ENCODE measurements at regions of chr2 and their contacts with region 1.

Region 1: GRCh38 chr2:130850788-130851623 is 14.3 kb downstream of the ARHGEF4 start:
- DNase-seq: no peak
- ATAC-seq: no peak
- H3K4me3 ChIP-seq: no peak overlapping the region
- H3K4me3 Mint-ChIP-seq: no peak overlapping the region
- H3K27ac ChIP-seq: no peak overlapping the region
- H3K27ac Mint-ChIP-seq: no peak overlapping the region
- H3K4me1 ChIP-seq: no peaks in the 10 kb centered on the region
- H3K4me1 Mint-ChIP-seq: no peaks in the 10 kb centered on the region
- H3K27me3 ChIP-seq: no peaks in the 10 kb centered on the region
- H3K27me3 Mint-ChIP-seq: no peaks in the 10 kb centered on the region
- CTCF ChIP-seq: no peak

Region 2: DNA sequence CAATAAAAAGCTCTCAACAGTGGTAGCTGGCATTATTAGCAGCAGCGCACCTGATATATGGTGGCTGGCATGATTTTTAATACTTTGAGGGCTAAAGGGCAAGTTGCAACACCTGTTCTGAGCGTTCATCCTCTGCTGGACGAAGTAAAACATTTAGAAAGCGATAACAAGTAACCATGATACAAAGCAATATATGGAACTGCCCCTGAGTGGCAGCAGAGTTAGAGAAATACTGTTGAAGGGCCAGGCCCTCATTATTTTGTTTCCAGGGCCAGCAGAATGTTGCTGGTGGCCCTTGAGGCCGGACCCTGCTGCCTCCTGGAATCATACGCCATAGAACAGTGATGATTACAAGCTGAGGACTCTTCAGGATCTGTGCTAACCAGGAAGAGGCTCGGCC is 33.5 kb after region 1 on chr2:
- CTCF ChIA-PET with region 1: no interaction called
- POLR2A ChIA-PET with region 1: no interaction called
- intact Hi-C with region 1: no loop called
- DNase-seq: no peak
- ATAC-seq: no peak
- H3K4me3 ChIP-seq: no peak overlapping the region
- H3K4me3 Mint-ChIP-seq: no peak overlapping the region
- H3K27ac ChIP-seq: no peak overlapping the region
- H3K27ac Mint-ChIP-seq: no peak overlapping the region
- H3K4me1 ChIP-seq: no peaks in the 10 kb centered on the region
- H3K4me1 Mint-ChIP-seq: no peaks in the 10 kb centered on the region
- H3K27me3 ChIP-seq: no peaks in the 10 kb centered on the region
- H3K27me3 Mint-ChIP-seq: peaks cover 9% of the 10 kb centered on the region
- CTCF ChIP-seq: no peak

Region 3: GRCh38 chr2:131557558-131558321 is 706.7 kb after region 1 on chr2:
- CTCF ChIA-PET with region 1: no interaction called
- POLR2A ChIA-PET with region 1: no interaction called
- intact Hi-C with region 1: loop called in 1 of 2 experiments (anchors 5 kb)
- DNase-seq: no peak
- ATAC-seq: no peak
- H3K4me3 ChIP-seq: no peak overlapping the region
- H3K4me3 Mint-ChIP-seq: no peak overlapping the region
- H3K27ac ChIP-seq: no peak overlapping the region
- H3K27ac Mint-ChIP-seq: no peak overlapping the region
- H3K4me1 ChIP-seq: no peaks in the 10 kb centered on the region
- H3K4me1 Mint-ChIP-seq: no peaks in the 10 kb centered on the region
- H3K27me3 ChIP-seq: no peaks in the 10 kb centered on the region
- H3K27me3 Mint-ChIP-seq: peaks cover 35% of the 10 kb centered on the region
- CTCF ChIP-seq: no peak